BJ (cell line): ENCODE measurements at regions of chr2 and their contacts with region 1.

Region 1: GRCh38 chr2:69306822-69307578 is 80.0 kb downstream of the GFPT1 start:
- DNase-seq: no peak
- H3K4me3 ChIP-seq: peak overlapping the region; percentile 48
- H3K27me3 ChIP-seq: no peaks in the 10 kb centered on the region
- CTCF ChIP-seq: peak; percentile 96

Region 2: GRCh38 chr2:68943581-68944568 is 363.1 kb before region 1 on chr2:
- CTCF ChIA-PET with region 1: interaction called, 20 read pairs
- POLR2A ChIA-PET with region 1: no interaction called
- DNase-seq: no peak
- H3K4me3 ChIP-seq: no peak overlapping the region
- H3K27me3 ChIP-seq: no peaks in the 10 kb centered on the region
- CTCF ChIP-seq: peak; percentile 79

Region 3: GRCh38 chr2:69012310-69013141 is 294.5 kb before region 1 on chr2:
- CTCF ChIA-PET with region 1: interaction called, 12 read pairs
- POLR2A ChIA-PET with region 1: no interaction called
- DNase-seq: no peak
- H3K4me3 ChIP-seq: peak overlapping the region; percentile 83
- H3K27me3 ChIP-seq: no peaks in the 10 kb centered on the region
- CTCF ChIP-seq: peak; percentile 82

Region 4: DNA sequence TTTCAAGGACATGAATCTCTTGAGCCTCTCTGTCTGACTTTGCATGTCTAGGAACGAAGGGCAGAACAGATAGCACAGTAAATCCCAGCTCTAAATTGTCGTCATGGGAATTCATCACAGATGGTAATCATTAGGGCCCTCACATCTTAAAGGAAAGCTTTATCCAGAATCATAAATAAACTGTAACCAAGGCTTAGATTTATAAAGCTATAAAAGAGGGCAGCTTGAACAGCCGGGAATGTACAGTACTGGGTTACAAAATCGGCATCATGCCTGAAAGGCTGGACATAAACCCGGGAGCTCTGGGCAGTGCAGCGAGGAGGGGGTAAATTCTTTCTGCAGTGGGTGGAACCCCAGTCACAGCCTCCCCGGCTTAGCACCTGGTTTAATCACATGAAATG is 64.3 kb before region 1 on chr2:
- CTCF ChIA-PET with region 1: interaction called, 11 read pairs
- POLR2A ChIA-PET with region 1: no interaction called
- DNase-seq: peak; percentile 97
- H3K4me3 ChIP-seq: no peak overlapping the region
- H3K27me3 ChIP-seq: no peaks in the 10 kb centered on the region
- CTCF ChIP-seq: no peak